Activated naive CD4-positive, alpha-beta T cell treated with anti-CD3 and anti-CD28 coated beads for 36 hours (primary cell): ENCODE measurements at regions of chr11 and their contacts with region 1.

Region 1: GRCh38 chr11:59560702-59561469 is 49.5 kb downstream of the OR4D9 start:
- DNase-seq: peak; percentile 90
- H3K4me3 Mint-ChIP-seq: peak overlapping the region; percentile 93
- H3K27ac Mint-ChIP-seq: peak overlapping the region; percentile 97
- H3K4me1 Mint-ChIP-seq: peaks cover 47% of the 10 kb centered on the region
- H3K27me3 Mint-ChIP-seq: peaks cover 4% of the 10 kb centered on the region

Region 2: GRCh38 chr11:59550368-59550841 is 10.5 kb before region 1 on chr11:
- CTCF ChIA-PET with region 1: interaction called, 4 read pairs
- intact Hi-C with region 1: loop called (anchors 1 kb)
- DNase-seq: peak; percentile 93
- H3K4me3 Mint-ChIP-seq: peak overlapping the region; percentile 79
- H3K27ac Mint-ChIP-seq: peak overlapping the region; percentile 93
- H3K4me1 Mint-ChIP-seq: peaks cover 27% of the 10 kb centered on the region
- H3K27me3 Mint-ChIP-seq: peaks cover 5% of the 10 kb centered on the region